ENCODE measurements at regions of chr21 and their contacts with region 1.

Region 1: GRCh38 chr21:14482165-14482564 is 64.0 kb downstream of the SAMSN1 start:
- DNase-seq: no peak
- ATAC-seq: no peak
- H3K4me3 ChIP-seq: no peak overlapping the region
- H3K27ac ChIP-seq: no peak overlapping the region
- H3K4me1 ChIP-seq: no peaks in the 10 kb centered on the region
- H3K27me3 ChIP-seq: no peaks in the 10 kb centered on the region
- CTCF ChIP-seq: no peak
- POLR2A ChIP-seq: no peak
- RAD21 ChIP-seq: no peak

Region 2: DNA sequence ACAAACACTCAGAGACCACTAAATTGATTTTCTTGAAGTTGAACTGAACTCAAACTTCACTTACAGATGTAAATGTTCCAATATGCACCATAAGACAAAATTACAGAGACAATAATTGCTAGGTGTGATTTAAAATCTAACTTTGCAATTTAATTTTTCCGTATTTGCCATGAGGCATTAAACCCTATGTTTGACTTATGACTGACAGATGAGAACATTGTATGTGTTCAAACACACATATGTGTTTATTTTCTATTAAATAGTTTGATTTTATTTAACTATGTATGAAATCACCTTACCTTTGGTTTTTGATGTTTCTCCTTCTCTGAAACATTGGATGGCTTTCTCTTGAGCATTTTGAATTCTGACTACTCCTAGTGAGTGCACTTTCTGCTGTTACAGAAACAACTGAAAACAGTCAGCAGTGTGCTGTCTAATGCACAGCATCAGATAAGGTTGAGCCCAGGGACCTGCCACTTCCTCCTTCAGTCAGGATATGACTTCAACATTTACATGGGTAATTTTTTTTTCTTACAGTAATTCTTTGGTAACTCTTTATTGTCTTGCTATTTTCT is 63.8 kb after region 1 on chr21 and contains the start of gene SAMSN1:
- CTCF ChIA-PET with region 1: no interaction called
- POLR2A ChIA-PET with region 1: no interaction called
- RAD21 ChIA-PET with region 1: no interaction called
- intact Hi-C with region 1: loop called (anchors 10 kb)
- DNase-seq: no peak
- ATAC-seq: no peak
- H3K4me3 ChIP-seq: no peak within 1 kb of the TSS
- H3K27ac ChIP-seq: no peak within 1 kb of the TSS
- H3K4me1 ChIP-seq: no peaks in the 10 kb centered on the region
- H3K27me3 ChIP-seq: no peaks in the 10 kb centered on the region
- CTCF ChIP-seq: no peak
- POLR2A ChIP-seq: no peak
- RAD21 ChIP-seq: no peak
- total RNA-seq, gene SAMSN1: 0.57 TPM

Measured in HCT116 (cell line).